ENCODE measurements at regions of chr4 and their contacts with region 1.

Region 1: GRCh38 chr4:100816436-100817045 is 298.7 kb upstream of the EMCN start:
- DNase-seq: no peak
- ATAC-seq: no peak
- H3K4me3 ChIP-seq: no peak overlapping the region
- H3K4me3 Mint-ChIP-seq: no peak overlapping the region
- H3K27ac ChIP-seq: no peak overlapping the region
- H3K27ac Mint-ChIP-seq: no peak overlapping the region
- H3K4me1 ChIP-seq: no peaks in the 10 kb centered on the region
- H3K4me1 Mint-ChIP-seq: no peaks in the 10 kb centered on the region
- H3K27me3 ChIP-seq: no peaks in the 10 kb centered on the region
- H3K27me3 Mint-ChIP-seq: peaks cover 0 to 5% of the 10 kb centered on the region in 2 donors

Region 2: DNA sequence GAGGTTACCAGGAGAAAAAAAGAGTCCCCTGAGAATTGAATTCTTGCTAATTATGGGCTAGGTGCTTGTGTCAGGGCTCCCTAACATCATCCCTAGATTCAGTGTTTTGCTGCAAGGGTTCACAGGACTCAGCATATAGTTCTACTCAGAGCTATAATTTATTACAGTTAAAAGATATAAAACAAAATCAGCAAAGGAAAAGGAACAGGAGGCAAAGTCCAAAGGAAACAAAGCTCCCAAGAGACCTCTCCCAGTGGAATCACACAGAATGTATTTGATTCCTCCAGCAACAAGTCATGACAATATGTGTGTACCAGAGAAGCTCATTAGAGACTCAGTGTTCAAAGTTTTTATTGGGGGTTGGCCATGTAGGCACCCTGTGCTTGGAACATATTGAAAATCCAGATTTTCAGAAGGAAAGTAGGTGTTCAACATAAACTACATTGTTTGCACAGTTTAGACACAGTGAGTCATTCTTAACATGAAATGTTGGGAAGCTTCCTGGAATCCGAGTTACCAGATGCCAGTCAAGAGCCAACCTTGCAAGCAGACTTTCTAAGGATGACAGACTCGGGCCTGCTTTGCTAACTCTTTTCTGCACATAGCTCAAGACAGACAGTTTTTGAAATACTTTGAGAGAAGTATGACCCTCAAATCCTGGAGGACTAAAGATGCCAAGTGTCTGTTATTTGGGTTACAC is 12.6 kb after region 1 on chr4:
- CTCF ChIA-PET with region 1: interaction called in 1 of 2 experiments, 10 read pairs
- POLR2A ChIA-PET with region 1: no interaction called
- DNase-seq: no peak
- ATAC-seq: no peak
- H3K4me3 ChIP-seq: no peak overlapping the region
- H3K4me3 Mint-ChIP-seq: no peak overlapping the region
- H3K27ac ChIP-seq: no peak overlapping the region
- H3K27ac Mint-ChIP-seq: no peak overlapping the region
- H3K4me1 ChIP-seq: no peaks in the 10 kb centered on the region
- H3K4me1 Mint-ChIP-seq: no peaks in the 10 kb centered on the region
- H3K27me3 ChIP-seq: no peaks in the 10 kb centered on the region
- H3K27me3 Mint-ChIP-seq: peaks cover 0 to 4% of the 10 kb centered on the region in 2 donors